ENCODE measurements at regions of chr5 and their contacts with region 1.

Region 1: DNA sequence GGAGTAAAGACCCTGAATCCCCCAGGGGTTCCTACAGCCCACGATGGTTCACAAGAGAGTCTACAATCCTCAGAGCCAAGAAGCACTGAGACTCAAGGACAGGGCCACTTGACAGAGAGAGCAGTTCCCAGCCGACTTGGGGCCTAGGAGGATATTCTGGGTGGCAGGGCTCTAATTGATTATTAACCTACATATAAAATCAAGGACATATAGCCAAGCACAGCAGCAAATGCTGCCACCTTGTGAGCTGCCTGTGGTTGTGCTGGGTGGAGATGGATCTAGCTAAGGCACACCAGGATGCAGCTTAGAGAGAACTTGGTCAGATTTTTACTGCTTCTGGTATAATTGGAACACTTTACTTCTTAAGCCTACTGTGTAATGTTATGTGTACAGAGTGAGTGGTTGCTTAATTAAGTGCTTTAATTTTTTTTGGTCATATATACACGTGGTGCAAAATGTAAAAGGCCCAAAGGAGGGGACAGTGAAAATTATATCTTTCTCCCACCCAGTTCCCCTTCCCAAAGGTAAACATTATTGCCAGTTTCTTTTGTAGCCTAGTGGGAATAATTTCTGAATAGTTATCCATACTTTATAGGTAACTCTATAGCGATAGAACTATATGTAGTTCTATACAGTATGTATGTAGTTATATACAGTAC is 78.8 kb downstream of the F2RL2 start:
- DNase-seq: peak; percentile 61 to 75 (median 69)
- H3K4me3 ChIP-seq: peak overlapping the region; percentile 12 to 46
- H3K4me3 Mint-ChIP-seq: peak overlapping the region; percentile 80 to 89 (median 83)
- H3K27ac ChIP-seq: peak overlapping the region; percentile 82
- H3K27ac Mint-ChIP-seq: peak overlapping the region; percentile 91 to 99 (median 99)
- H3K4me1 ChIP-seq: peaks cover 96% of the 10 kb centered on the region
- H3K4me1 Mint-ChIP-seq: peaks cover 79 to 95% (median 87%) of the 10 kb centered on the region in 4 donors
- H3K27me3 ChIP-seq: no peaks in the 10 kb centered on the region
- H3K27me3 Mint-ChIP-seq: no peaks in the 10 kb centered on the region

Region 2: GRCh38 chr5:76074487-76075065 is 469.8 kb before region 1 on chr5:
- CTCF ChIA-PET with region 1: no interaction called
- POLR2A ChIA-PET with region 1: no interaction called
- intact Hi-C with region 1: loop called (anchors 10 kb)
- DNase-seq: peak in 3 of 5 donors; percentile 22 to 31 (median 24)
- H3K4me3 ChIP-seq: no peak overlapping the region
- H3K4me3 Mint-ChIP-seq: no peak overlapping the region
- H3K27ac ChIP-seq: no peak overlapping the region
- H3K27ac Mint-ChIP-seq: no peak overlapping the region
- H3K4me1 ChIP-seq: no peaks in the 10 kb centered on the region
- H3K4me1 Mint-ChIP-seq: no peaks in the 10 kb centered on the region
- H3K27me3 ChIP-seq: no peaks in the 10 kb centered on the region
- H3K27me3 Mint-ChIP-seq: peaks cover 18 to 53% of the 10 kb centered on the region in 2 donors

Region 3: DNA sequence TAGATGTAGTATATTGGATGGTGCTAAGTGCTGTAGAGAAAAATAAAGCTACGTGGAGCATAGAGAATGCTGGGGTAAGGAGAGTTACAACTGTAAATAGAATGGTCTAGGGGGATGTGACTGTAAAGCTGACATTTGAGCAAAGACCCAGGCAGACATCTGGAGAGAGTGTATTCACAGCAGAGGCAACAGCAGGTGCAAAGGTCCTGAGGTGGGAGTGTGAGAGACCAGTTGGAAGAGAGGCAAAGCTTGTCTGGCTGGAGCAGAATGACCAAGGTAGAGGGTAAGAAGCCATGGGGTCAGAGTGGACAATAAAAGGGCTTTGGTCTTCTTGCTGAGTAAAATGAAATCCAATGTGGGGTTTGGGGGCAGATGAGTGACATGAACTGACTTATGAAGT is 234.2 kb before region 1 on chr5:
- CTCF ChIA-PET with region 1: interaction called, 16 read pairs
- POLR2A ChIA-PET with region 1: no interaction called
- intact Hi-C with region 1: no loop called
- DNase-seq: no peak
- H3K4me3 ChIP-seq: no peak overlapping the region
- H3K4me3 Mint-ChIP-seq: no peak overlapping the region
- H3K27ac ChIP-seq: no peak overlapping the region
- H3K27ac Mint-ChIP-seq: peak overlapping the region in 1 of 7 donors; percentile 13
- H3K4me1 ChIP-seq: no peaks in the 10 kb centered on the region
- H3K4me1 Mint-ChIP-seq: peaks cover 5 to 14% (median 8%) of the 10 kb centered on the region in 4 donors
- H3K27me3 ChIP-seq: no peaks in the 10 kb centered on the region
- H3K27me3 Mint-ChIP-seq: no peaks in the 10 kb centered on the region

Region 4: GRCh38 chr5:76337953-76338451 is 206.4 kb before region 1 on chr5:
- CTCF ChIA-PET with region 1: interaction called, 47 read pairs
- POLR2A ChIA-PET with region 1: interaction called, 38 read pairs
- intact Hi-C with region 1: loop called (anchors 1 kb)
- DNase-seq: peak; percentile 55 to 62 (median 58)
- H3K4me3 ChIP-seq: no peak overlapping the region
- H3K4me3 Mint-ChIP-seq: peak overlapping the region in 4 of 8 donors; percentile 16 to 54 (median 25)
- H3K27ac ChIP-seq: no peak overlapping the region
- H3K27ac Mint-ChIP-seq: peak overlapping the region in 5 of 7 donors; percentile 36 to 70 (median 66)
- H3K4me1 ChIP-seq: peaks cover 33% of the 10 kb centered on the region
- H3K4me1 Mint-ChIP-seq: peaks cover 28 to 42% (median 30%) of the 10 kb centered on the region in 4 donors
- H3K27me3 ChIP-seq: no peaks in the 10 kb centered on the region
- H3K27me3 Mint-ChIP-seq: no peaks in the 10 kb centered on the region

Region 5: DNA sequence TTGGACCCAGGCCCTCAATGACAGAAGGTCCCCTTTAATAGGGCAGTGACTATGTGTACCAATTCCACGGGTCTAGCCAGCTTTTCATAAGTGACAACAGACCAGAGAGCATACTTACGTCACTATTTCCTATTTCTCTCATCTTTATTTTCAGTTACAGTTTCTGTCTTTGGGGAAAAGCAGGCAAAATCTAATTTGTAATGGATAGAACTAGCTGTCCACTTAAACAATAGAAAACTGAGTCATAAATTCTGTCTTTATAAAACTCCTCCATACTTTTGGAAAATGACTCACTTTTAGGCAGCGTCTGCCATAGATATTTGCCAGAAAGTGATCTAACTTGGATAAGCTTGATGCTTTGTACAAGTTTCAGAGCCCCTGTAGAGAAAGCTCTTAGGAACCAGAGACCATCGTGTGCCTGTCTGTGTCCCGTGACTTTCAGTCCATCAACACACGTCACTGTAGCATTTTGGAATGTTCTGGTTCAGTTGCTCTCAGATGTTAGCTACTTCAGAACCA is 23.1 kb before region 1 on chr5:
- CTCF ChIA-PET with region 1: interaction called, 5 read pairs
- POLR2A ChIA-PET with region 1: interaction called, 11 read pairs
- intact Hi-C with region 1: no loop called
- DNase-seq: no peak
- H3K4me3 ChIP-seq: no peak overlapping the region
- H3K4me3 Mint-ChIP-seq: peak overlapping the region; percentile 8 to 68 (median 24)
- H3K27ac ChIP-seq: no peak overlapping the region
- H3K27ac Mint-ChIP-seq: peak overlapping the region; percentile 57 to 90 (median 80)
- H3K4me1 ChIP-seq: peaks cover 57% of the 10 kb centered on the region
- H3K4me1 Mint-ChIP-seq: peaks cover 52 to 84% (median 70%) of the 10 kb centered on the region in 4 donors
- H3K27me3 ChIP-seq: no peaks in the 10 kb centered on the region
- H3K27me3 Mint-ChIP-seq: no peaks in the 10 kb centered on the region

Region 6: DNA sequence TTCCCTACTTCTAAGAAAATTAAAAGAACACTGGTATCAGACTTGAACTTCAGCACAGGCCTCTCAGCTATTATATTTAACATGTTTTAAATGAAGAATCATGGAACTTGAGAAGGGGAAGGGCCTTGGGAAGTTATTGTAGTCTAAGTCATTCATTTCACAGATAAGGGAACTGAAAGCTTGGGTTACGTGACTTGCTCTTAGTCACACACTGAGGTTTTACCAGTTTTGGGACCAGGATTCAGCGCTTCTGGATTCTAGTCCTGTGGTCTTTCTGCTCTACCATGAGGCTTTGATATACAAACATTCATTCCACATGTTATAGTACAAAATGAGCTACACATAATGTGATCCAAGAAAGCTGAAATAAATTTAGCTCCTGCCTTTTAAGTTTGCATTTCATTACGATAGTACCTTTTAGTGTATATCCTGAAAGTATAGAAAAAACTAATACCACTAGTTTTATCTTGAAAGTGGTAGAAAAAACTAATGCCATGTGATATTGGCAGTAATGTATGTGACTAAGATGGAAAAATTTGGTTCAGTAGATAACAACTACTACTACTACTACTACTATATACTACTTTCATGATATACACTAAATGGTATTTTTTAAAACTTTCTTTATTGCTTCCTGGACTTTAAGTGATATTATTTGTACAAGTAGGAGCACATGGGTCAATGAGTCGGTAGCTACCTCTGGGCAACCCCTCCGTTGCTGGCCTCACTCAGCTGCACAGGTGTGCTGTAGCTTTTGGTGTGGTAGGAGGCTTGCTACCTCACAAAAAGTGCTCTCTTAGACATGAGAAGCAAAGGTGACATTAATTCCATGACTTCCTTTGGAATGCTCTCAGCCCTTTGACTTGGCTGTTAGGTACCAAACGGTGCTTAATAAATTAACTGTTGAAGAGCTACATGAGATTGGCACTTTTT is 38.1 kb after region 1 on chr5:
- CTCF ChIA-PET with region 1: interaction called, 50 read pairs
- POLR2A ChIA-PET with region 1: interaction called, 14 read pairs
- intact Hi-C with region 1: loop called (anchors 1 kb)
- DNase-seq: no peak
- H3K4me3 ChIP-seq: no peak overlapping the region
- H3K4me3 Mint-ChIP-seq: no peak overlapping the region
- H3K27ac ChIP-seq: no peak overlapping the region
- H3K27ac Mint-ChIP-seq: peak overlapping the region in 6 of 7 donors; percentile 12 to 76 (median 46)
- H3K4me1 ChIP-seq: peaks cover 16% of the 10 kb centered on the region
- H3K4me1 Mint-ChIP-seq: peaks cover 13 to 37% (median 18%) of the 10 kb centered on the region in 4 donors
- H3K27me3 ChIP-seq: no peaks in the 10 kb centered on the region
- H3K27me3 Mint-ChIP-seq: no peaks in the 10 kb centered on the region